HEK293 (cell line): ENCODE measurements at regions of chr17 and their contacts with region 1.

Region 1: GRCh38 chr17:67942810-67943209 is 53.5 kb downstream of the C17orf58 start:
- H3K4me3 ChIP-seq: no peak overlapping the region
- H3K27ac ChIP-seq: no peak overlapping the region
- H3K4me1 ChIP-seq: no peaks in the 10 kb centered on the region
- CTCF ChIP-seq: no peak

Region 2: GRCh38 chr17:67509390-67510289 is 433.2 kb before region 1 on chr17:
- CTCF ChIA-PET with region 1: no interaction called
- POLR2A ChIA-PET with region 1: no interaction called
- H3K4me3 ChIP-seq: no peak overlapping the region
- H3K27ac ChIP-seq: no peak overlapping the region
- H3K4me1 ChIP-seq: peaks cover 2% of the 10 kb centered on the region; the same call in 1 of the 2 replicates
- CTCF ChIP-seq: no peak

Region 3: GRCh38 chr17:67931233-67931632 is 11.6 kb before region 1 on chr17:
- CTCF ChIA-PET with region 1: interaction called, 20 read pairs
- POLR2A ChIA-PET with region 1: no interaction called
- H3K4me3 ChIP-seq: no peak overlapping the region
- H3K27ac ChIP-seq: no peak overlapping the region
- H3K4me1 ChIP-seq: no peaks in the 10 kb centered on the region
- CTCF ChIP-seq: no peak

Region 4: DNA sequence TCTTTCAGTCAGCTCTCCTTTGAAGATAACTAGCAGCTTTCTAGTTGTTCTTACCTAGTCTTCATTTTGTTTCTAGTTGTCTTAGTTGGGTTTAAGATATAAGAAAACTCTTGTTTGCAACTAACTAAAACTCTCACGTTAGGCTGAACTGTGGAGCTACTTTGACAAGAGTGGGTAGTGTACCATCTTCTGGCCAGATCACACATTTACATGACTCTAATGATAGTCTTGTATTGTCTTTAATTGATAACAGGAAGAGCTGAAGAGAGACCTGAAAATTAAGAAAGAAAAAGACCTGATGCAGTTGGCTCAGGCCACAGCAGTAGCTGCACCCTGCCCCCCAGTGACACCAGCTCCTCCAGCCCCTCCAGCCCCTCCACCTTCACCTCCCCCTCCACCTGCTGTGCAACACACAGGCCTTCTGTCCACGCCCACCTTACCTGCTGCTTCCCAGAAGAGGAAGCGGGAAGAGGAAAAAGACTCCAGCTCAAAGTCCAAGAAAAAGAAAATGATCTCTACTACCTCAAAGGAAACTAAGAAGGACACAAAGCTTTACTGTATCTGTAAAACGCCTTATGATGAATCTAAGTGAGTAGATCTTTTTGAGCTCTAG is 16.6 kb after region 1 on chr17:
- CTCF ChIA-PET with region 1: interaction called, 13 read pairs
- POLR2A ChIA-PET with region 1: no interaction called
- H3K4me3 ChIP-seq: no peak overlapping the region
- H3K27ac ChIP-seq: no peak overlapping the region
- H3K4me1 ChIP-seq: no peaks in the 10 kb centered on the region
- CTCF ChIP-seq: no peak

Region 5: GRCh38 chr17:68255731-68256538 is 313.1 kb after region 1 on chr17:
- CTCF ChIA-PET with region 1: no interaction called
- POLR2A ChIA-PET with region 1: no interaction called
- H3K4me3 ChIP-seq: no peak overlapping the region
- H3K27ac ChIP-seq: no peak overlapping the region
- H3K4me1 ChIP-seq: no peaks in the 10 kb centered on the region
- CTCF ChIP-seq: no peak